ENCODE measurements at regions of chr1 and their contacts with region 1.

Region 1: DNA sequence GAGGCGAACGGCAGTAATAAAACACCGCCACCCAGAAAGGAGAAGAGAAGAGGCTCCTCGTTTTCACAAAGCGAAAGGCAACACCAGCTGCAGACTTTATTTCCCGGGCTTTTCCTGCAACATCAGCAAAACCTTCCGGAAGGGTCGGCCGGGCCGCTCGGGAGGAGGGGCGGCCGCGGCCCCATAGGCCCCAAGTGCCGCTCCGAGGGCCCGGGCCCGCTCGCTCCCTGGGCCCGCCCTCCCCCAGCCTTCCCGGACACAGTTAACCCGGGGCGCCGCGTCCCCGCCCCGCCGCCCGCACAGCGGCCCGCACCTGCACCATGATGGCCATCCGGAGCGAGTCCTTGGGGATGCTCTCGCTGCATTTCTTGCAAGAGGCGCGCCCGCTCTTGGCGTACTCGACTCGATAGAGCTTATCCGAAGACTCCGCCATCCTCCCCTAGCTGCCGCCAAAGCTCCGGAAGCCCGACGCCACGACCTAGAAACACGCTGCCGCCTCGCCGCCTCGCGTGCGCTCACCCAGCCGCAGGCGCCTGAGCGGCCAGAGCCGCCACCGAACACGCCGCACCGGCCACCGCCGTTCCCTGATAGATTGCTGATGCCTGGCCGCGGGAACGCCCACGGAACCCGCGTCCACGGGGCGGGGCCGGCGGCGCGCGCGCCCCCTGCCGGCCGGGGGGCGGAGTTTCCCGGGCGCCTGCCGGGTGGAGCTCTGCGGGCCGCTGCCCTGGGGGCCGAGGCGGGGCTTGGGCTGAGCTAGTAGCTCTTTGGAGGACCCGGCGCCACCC is at the start of gene PARP1:
- DNase-seq: peak; percentile 95
- ATAC-seq: peak; percentile 83
- H3K4me3 Mint-ChIP-seq: peak within 1 kb of the TSS; percentile 98
- H3K27ac Mint-ChIP-seq: peak within 1 kb of the TSS; percentile 96
- H3K4me1 Mint-ChIP-seq: peaks cover 57% of the 10 kb centered on the region
- H3K27me3 Mint-ChIP-seq: no peaks in the 10 kb centered on the region
- CTCF ChIP-seq: peak; percentile 41
- total RNA-seq, gene PARP1: 232 and 260 TPM in 2 replicates

Region 2: DNA sequence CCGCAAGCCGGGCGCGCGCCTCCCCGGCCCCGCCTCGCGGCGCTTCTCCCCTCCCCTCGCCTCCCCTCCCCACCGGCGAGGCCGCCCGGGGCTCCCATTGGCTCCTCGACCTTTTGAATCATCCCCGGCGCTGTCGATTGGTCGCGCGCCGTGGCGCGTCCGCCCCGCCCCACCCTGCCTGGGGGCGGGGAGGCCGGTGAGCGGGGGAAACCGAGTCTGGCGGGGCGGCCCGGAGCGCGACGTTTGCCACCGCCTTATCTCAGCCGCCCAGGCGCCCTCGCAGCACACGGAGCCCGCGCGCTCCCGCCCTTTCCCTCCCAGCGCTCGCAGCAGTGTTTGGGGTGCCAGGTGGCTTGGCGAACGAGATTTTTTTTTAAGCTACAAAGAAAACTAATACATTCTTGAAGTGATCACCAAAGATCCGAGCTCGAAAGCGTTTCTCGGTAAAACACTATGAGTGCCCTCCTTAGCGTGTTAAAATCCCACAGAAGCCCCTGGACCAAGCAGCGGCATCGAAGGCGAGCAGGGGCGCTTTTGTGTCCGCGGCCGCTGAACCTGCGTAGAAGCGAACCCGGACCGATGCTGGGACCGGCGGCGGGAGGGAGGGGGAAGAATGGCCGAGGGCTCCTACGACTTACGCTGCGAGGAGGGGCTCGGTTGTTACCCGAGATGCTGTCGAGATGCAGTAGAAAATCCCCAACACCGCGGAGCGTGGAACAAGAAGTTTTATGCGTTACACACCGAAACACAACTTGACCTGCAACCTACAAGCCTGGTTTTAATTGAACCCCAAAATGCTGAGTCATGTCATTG is 979.4 kb before region 1 on chr1:
- CTCF ChIA-PET with region 1: no interaction called
- POLR2A ChIA-PET with region 1: no interaction called
- intact Hi-C with region 1: loop called (anchors 5 kb)
- DNase-seq: peak; percentile 88
- ATAC-seq: peak; percentile 92
- H3K4me3 Mint-ChIP-seq: peak overlapping the region; percentile 89
- H3K27ac Mint-ChIP-seq: peak overlapping the region; percentile 90
- H3K4me1 Mint-ChIP-seq: peaks cover 48% of the 10 kb centered on the region
- H3K27me3 Mint-ChIP-seq: no peaks in the 10 kb centered on the region
- CTCF ChIP-seq: no peak

Region 3: GRCh38 chr1:226186124-226187018 is 221.3 kb before region 1 on chr1 and contains the start of gene ACBD3:
- CTCF ChIA-PET with region 1: interaction called, 3 read pairs
- POLR2A ChIA-PET with region 1: interaction called, 3 read pairs
- intact Hi-C with region 1: loop called (anchors 1 kb)
- DNase-seq: peak; percentile 79
- ATAC-seq: peak; percentile 93
- H3K4me3 Mint-ChIP-seq: peak within 1 kb of the TSS; percentile 94
- H3K27ac Mint-ChIP-seq: peak within 1 kb of the TSS; percentile 94
- H3K4me1 Mint-ChIP-seq: peaks cover 45% of the 10 kb centered on the region
- H3K27me3 Mint-ChIP-seq: no peaks in the 10 kb centered on the region
- CTCF ChIP-seq: no peak
- total RNA-seq, gene ACBD3: 38.6 and 41.4 TPM in 2 replicates

Region 4: DNA sequence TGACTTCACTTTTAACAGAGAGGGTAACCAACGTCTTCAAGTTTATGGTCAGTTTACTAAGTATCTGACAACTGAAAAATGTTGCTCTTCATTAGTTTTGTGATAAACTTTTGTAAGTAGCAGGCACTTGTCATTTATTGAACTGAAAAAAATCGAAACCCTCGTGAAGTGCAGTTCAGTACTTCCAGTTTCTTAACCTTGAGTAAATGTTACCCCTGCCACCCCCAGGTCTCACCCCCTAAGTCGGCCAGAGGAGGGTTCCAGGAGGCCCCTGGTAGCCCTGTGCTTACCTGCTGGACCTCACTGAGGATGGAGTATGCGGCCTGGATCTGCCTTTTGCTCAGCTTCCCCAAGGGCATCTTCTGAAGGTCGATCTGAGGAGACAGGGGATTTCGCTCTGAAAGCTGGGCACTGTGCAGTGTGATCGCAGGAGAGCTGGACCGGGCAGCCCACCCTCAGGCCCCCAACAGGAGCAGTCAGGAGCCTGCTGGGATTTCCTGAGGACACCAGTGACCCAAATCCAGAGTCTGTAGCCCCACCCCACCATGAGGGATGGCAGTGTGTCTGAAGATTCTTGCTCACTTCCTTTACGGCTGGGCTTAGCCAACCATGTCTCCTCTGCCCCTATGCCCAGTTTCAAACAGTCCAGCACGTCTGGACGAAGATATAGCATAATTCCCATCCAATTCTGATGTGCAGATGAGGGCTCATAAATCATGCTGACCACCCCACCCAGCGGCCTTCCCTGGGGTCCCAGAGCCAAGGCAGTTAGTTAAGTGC is 37.4 kb before region 1 on chr1:
- CTCF ChIA-PET with region 1: interaction called, 4 read pairs
- POLR2A ChIA-PET with region 1: interaction called, 18 read pairs
- intact Hi-C with region 1: loop called (anchors 1 kb)
- DNase-seq: no peak
- ATAC-seq: peak; percentile 74
- H3K4me3 Mint-ChIP-seq: peak overlapping the region; percentile 68
- H3K27ac Mint-ChIP-seq: peak overlapping the region; percentile 91
- H3K4me1 Mint-ChIP-seq: peaks cover 48% of the 10 kb centered on the region
- H3K27me3 Mint-ChIP-seq: no peaks in the 10 kb centered on the region
- CTCF ChIP-seq: no peak

Region 5: GRCh38 chr1:226547754-226548191 is 140.1 kb after region 1 on chr1:
- CTCF ChIA-PET with region 1: interaction called, 6 read pairs
- POLR2A ChIA-PET with region 1: interaction called, 5 read pairs
- intact Hi-C with region 1: loop called (anchors 1 kb)
- DNase-seq: peak; percentile 52
- ATAC-seq: peak; percentile 71
- H3K4me3 Mint-ChIP-seq: peak overlapping the region; percentile 28
- H3K27ac Mint-ChIP-seq: no peak overlapping the region
- H3K4me1 Mint-ChIP-seq: peaks cover 21% of the 10 kb centered on the region
- H3K27me3 Mint-ChIP-seq: peaks cover 21% of the 10 kb centered on the region
- CTCF ChIP-seq: peak; percentile 50

Region 6: GRCh38 chr1:226827968-226828513 is 420.4 kb after region 1 on chr1:
- CTCF ChIA-PET with region 1: no interaction called
- POLR2A ChIA-PET with region 1: no interaction called
- intact Hi-C with region 1: loop called (anchors 5 kb)
- DNase-seq: peak; percentile 82
- ATAC-seq: peak; percentile 97
- H3K4me3 Mint-ChIP-seq: peak overlapping the region; percentile 58
- H3K27ac Mint-ChIP-seq: peak overlapping the region; percentile 80
- H3K4me1 Mint-ChIP-seq: peaks cover 37% of the 10 kb centered on the region
- H3K27me3 Mint-ChIP-seq: no peaks in the 10 kb centered on the region
- CTCF ChIP-seq: peak; percentile 67

Region 7: DNA sequence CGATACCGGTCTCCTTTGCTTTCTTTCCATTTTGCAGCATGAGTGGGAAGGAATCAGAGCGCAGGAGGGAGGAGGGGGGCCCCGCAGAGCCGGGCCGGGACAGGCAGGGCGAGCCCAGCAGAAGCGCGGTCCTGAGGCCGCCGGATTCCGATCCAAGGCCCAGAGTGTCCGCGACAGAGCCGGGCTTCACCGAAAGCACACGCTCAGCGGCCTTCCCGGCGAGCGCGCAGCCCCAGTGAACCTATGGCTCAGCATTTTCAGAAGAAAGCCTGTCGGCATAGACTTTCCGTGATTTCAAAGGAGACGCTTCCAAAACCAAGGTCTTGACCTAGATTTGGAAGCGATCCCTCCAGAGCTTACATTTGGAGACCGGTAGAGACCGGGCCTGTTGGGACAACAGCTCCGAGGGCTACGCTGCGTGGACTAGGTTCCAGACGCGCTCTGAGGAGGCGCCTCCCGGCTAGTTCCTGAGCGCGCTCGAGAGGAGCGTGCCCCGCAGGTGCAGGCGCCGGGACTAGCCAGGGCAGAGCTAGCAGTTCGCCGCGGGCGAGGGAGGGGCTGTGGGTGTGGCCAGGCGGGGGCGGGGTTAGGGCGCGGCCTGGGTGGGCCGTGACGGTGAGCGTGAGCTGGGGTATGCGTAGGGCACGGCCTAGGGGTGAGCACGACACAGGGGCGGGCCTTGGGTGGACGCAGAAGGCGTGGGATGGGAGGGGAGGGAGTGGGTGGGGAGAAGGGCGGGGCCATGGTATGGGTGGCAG is 1380.0 kb after region 1 on chr1:
- CTCF ChIA-PET with region 1: no interaction called
- POLR2A ChIA-PET with region 1: no interaction called
- intact Hi-C with region 1: loop called (anchors 5 kb)
- DNase-seq: peak; percentile 83
- ATAC-seq: peak; percentile 93
- H3K4me3 Mint-ChIP-seq: peak overlapping the region; percentile 86
- H3K27ac Mint-ChIP-seq: peak overlapping the region; percentile 61
- H3K4me1 Mint-ChIP-seq: peaks cover 22% of the 10 kb centered on the region
- H3K27me3 Mint-ChIP-seq: no peaks in the 10 kb centered on the region
- CTCF ChIP-seq: no peak